Heart right ventricle (tissue), 16 donors: ENCODE measurements at regions of chr3 and their contacts with region 1.

Region 1: DNA sequence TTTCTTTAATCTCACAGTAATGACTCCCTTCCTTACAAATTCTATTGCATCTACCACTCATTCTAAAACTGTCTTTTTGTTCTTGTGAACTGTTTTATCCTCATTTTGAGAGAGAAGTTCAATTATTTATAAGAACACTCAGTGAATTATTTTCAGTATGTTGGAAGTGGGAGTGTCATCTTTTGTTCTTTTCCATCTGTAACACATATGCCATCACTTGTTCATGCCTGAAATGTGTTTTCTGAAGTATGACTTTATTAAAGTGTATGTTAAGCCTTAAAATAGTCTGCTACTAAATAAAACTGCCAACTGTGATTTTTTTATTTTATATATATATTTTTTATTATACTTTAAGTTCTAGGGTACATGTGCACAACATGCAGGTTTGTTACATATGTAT is 623.0 kb upstream of the CBLB start:
- DNase-seq: no peak
- ATAC-seq: no peak
- H3K4me3 ChIP-seq: no peak overlapping the region
- H3K27ac ChIP-seq: no peak overlapping the region
- H3K4me1 ChIP-seq: peaks cover 0 to 7% (median 0%) of the 10 kb centered on the region in 9 donors
- H3K27me3 ChIP-seq: no peaks in the 10 kb centered on the region
- CTCF ChIP-seq: no peak

Region 2: GRCh38 chr3:106560451-106560966 is 68.7 kb after region 1 on chr3:
- intact Hi-C with region 1: loop called in 1 of 10 experiments (anchors 2 kb)
- DNase-seq: no peak
- ATAC-seq: peak in 1 of 8 donors; percentile 50
- H3K4me3 ChIP-seq: no peak overlapping the region
- H3K27ac ChIP-seq: no peak overlapping the region
- H3K4me1 ChIP-seq: no peaks in the 10 kb centered on the region
- H3K27me3 ChIP-seq: no peaks in the 10 kb centered on the region
- CTCF ChIP-seq: no peak